Ovary (tissue), 10 donors: ENCODE measurements at regions of chr2 and their contacts with region 1.

Region 1: DNA sequence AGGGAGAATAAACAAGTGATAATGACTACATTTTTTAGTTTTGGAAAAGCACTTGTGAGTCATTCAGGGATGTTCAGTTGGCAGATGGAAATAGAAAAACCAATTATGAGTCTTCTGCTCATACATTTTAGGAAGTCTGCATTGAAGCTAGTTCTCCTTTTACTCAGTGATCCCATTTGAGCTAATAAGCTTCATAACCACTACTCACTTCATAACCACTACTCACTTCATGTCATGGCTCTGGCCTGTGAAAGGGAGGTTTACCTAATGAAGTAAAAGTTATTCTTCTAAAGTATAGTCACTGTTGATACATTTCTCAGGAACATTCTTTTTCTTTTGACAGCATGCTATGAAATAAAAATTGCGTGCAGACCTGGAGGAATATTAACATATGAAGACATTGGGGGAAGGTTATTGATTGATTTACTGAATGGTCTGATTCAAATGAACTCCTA is 948.7 kb downstream of the TSN start:
- DNase-seq: no peak
- H3K4me3 ChIP-seq: no peak overlapping the region
- H3K27ac ChIP-seq: no peak overlapping the region
- H3K4me1 ChIP-seq: no peaks in the 10 kb centered on the region
- H3K27me3 ChIP-seq: no peaks in the 10 kb centered on the region
- CTCF ChIP-seq: no peak
- EP300 ChIP-seq: no peak
- POLR2A ChIP-seq: no peak

Region 2: DNA sequence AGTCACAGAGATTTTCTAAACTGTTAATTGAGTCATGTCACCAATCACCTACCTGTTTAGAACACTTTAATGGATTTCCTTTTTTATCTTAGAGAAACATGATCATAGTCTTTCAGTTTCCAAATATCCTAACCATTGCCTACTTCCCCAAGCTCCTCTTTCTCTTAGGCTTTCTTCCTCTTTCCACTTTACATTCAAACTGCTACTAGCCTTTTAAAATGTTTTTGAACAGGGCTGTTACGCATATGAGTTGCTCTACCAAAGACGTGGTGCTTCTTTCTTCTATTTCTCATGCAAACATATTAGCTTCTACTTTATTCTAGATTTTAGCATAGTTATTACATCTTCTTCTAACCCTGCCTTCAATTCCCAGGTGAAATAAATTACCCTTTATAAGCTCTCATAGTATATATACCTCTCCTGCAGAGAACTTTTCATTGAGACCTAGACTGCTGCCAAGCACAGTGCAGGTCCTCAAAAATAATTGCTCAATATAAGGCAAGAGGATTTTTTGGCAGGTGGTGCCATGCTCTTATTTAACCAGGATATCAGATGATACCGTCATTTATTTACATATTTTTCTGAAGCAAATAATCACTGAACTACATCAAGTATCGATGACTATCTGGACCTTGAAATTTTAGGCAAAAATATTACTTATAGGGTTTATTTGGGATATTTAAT is 11.6 kb before region 1 on chr2:
- intact Hi-C with region 1: loop called in 1 of 4 experiments (anchors 1 kb)
- DNase-seq: no peak
- H3K4me3 ChIP-seq: no peak overlapping the region
- H3K27ac ChIP-seq: no peak overlapping the region
- H3K4me1 ChIP-seq: no peaks in the 10 kb centered on the region
- H3K27me3 ChIP-seq: no peaks in the 10 kb centered on the region
- CTCF ChIP-seq: no peak
- EP300 ChIP-seq: no peak
- POLR2A ChIP-seq: no peak